Activated CD4-positive, alpha-beta T cell treated with anti-CD3 and anti-CD28 coated beads, Interleukin-2, amount 10 ng/mL, durations not matched to agents 24 days and 14 days (primary cell): ENCODE measurements at regions of chr11 and their contacts with region 1.

Region 1: DNA sequence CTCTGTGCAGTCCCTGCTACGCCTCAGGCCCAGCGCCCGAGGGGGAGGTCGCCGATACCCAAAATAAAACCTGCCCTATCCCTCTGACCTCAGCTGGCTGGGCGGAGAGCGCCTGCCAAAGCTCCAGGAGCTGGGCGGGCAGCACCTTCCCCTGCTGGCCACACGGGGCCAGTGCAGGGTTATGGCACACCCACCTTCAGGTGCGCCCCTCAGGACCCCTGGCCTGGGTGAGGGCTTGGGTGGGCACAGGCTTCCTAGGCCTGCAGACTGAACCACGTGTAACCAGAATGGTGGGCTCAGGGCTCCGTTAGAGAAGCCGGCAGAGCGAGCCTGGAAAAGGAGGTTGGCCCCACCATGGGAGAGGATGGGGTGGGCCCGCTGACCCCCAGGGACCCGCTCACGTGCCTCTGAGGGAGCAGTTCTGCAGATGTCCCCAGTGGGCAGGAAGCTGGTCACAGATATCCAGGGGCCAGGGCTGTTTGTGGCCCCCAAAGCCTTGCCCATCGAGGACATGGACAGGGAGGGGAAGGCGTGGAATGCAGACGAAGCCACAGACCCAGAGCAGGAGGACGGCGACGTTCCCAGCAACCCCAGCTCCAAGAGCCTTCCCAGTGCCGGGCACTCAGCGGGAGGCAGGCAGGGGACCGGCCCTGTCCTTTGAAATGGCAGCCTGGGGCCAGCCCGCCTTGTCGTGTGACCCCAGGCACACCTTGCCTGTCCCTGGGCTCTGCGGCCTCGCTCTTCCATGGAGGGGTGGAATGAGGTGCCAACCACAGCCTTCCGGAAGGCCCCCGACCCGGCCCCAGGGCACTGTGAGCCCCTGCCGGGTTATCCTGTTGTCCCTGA is 1.6 kb upstream of the TNNT3 start:
- DNase-seq: no peak
- H3K4me3 Mint-ChIP-seq: no peak overlapping the region
- H3K27ac Mint-ChIP-seq: no peak overlapping the region
- H3K4me1 Mint-ChIP-seq: peaks cover 5% of the 10 kb centered on the region
- H3K27me3 Mint-ChIP-seq: no peaks in the 10 kb centered on the region

Region 2: DNA sequence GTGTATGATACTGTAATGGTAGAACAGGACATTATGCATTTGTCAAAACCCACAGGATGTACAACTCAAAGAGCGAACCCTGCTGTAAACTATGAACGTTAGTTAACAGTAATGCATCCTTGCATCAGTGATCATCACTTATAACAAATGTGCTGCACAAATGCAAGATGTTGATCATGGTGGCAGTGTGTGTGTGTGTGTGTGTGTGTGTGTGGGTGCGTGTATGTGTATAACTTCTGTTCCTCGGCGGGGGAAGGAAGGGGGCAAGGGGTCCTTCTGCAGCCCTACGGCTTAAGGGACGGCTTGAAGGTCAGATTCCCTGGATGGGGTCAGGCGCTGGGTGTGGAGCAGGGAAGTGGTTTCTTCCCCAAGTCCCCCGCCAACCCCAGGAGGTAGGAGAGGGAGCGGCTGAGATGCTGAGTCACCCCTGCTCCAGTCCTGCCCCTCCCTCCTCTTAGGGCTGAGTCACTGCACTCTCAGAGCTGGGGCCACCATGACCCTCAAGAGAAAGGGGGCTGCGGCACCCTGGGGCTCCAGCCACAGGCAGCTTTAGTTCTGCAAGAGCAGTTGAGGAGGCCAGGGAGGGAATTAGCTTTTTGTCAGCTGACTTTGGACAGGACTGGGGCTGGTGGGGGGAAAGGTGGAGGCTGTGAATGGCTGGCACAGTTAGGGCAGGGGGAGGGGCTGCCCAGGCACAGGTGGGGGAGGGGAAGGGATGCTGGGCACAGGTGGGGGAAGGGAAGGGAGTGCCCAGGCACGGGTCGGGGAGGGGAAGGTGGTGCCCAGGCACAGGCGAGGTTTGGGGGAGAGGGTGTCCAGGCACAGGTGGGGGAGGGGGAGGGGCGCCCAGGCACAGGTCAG is 145.4 kb before region 1 on chr11:
- intact Hi-C with region 1: no loop called
- DNase-seq: peak; percentile 81
- H3K4me3 Mint-ChIP-seq: peak overlapping the region; percentile 73
- H3K27ac Mint-ChIP-seq: peak overlapping the region; percentile 82
- H3K4me1 Mint-ChIP-seq: peaks cover 21% of the 10 kb centered on the region
- H3K27me3 Mint-ChIP-seq: peaks cover 7% of the 10 kb centered on the region

Region 3: GRCh38 chr11:1827095-1827813 is 90.6 kb before region 1 on chr11:
- intact Hi-C with region 1: no loop called
- DNase-seq: no peak
- H3K4me3 Mint-ChIP-seq: no peak overlapping the region
- H3K27ac Mint-ChIP-seq: no peak overlapping the region
- H3K4me1 Mint-ChIP-seq: no peaks in the 10 kb centered on the region
- H3K27me3 Mint-ChIP-seq: no peaks in the 10 kb centered on the region

Region 4: GRCh38 chr11:1837171-1838076 is 80.5 kb before region 1 on chr11:
- intact Hi-C with region 1: loop called (anchors 1 kb)
- DNase-seq: peak; percentile 93
- H3K4me3 Mint-ChIP-seq: no peak overlapping the region
- H3K27ac Mint-ChIP-seq: no peak overlapping the region
- H3K4me1 Mint-ChIP-seq: peaks cover 5% of the 10 kb centered on the region
- H3K27me3 Mint-ChIP-seq: peaks cover 3% of the 10 kb centered on the region

Region 5: DNA sequence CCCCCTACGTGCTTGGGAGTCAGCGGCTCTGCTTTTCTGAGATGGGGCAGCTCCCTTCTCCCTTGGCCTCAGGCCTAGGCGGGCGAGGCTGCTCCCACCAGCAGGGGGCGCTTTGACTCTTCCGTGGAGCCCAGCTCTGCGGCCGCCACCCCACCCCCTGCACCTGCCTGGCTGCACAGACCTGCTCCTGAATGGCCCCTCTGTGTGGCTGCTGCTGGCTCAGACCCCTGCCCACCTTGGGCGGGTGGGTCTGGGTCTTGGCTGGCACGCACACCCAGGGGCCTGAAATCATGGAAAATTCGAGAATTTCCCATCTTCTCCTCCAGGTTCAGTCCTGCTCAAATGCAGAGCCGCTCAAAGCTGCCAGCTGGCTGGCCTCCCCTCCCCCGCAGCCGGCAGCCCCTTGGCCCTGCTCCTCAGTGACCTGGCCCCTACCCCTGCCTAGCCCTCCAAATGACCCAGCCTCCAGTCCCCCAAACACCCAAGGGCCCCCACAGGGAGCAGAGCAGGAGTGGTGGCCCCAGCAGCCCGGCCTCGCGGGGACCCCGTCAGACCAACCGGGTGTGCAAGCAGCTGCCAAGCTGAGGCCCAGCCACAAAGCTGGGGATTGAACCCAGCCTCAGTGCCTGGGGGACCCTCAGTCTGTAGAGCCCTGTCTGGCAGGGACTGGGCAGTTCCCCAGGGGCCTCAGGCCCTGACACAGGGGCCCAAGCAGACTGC is 35.2 kb before region 1 on chr11:
- intact Hi-C with region 1: loop called (anchors 5 kb)
- DNase-seq: peak; percentile 92
- H3K4me3 Mint-ChIP-seq: no peak overlapping the region
- H3K27ac Mint-ChIP-seq: no peak overlapping the region
- H3K4me1 Mint-ChIP-seq: peaks cover 5% of the 10 kb centered on the region
- H3K27me3 Mint-ChIP-seq: no peaks in the 10 kb centered on the region

Region 6: DNA sequence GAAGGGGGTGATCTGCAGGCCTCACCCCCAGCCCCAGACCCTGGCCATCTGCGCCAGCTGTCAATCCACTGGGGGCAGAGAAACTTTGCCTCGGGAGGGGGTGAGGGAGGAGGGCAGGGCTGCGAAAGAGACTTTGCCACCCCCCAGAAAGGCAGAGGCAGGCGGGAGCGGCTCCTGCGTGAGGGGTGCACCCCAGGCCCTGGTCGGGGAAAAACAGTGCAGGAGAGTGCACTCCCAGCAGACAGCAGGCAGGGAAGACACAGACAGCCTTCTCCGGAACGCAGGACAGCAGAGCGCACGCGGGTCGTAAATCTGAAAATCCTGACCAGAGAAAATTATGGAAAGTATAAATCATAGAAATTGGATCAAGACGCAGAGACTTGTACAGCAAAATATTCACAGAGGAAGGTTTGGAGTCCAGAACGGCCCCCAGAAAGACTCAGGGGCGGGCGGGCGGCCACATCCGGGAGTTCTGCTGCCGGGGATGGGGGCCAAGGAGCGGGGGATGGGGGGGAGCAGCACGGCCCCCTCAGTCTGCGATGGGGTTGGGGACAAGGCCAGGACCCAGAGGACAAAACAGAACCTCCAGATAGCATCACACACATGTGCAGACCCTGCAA is 21.2 kb after region 1 on chr11:
- intact Hi-C with region 1: loop called (anchors 1 kb)
- DNase-seq: peak; percentile 55
- H3K4me3 Mint-ChIP-seq: no peak overlapping the region
- H3K27ac Mint-ChIP-seq: no peak overlapping the region
- H3K4me1 Mint-ChIP-seq: peaks cover 5% of the 10 kb centered on the region
- H3K27me3 Mint-ChIP-seq: no peaks in the 10 kb centered on the region